Activated naive CD4-positive, alpha-beta T cell treated with anti-CD3 and anti-CD28 coated beads for 36 hours (primary cell): ENCODE measurements at regions of chr11 and their contacts with region 1.

Region 1: DNA sequence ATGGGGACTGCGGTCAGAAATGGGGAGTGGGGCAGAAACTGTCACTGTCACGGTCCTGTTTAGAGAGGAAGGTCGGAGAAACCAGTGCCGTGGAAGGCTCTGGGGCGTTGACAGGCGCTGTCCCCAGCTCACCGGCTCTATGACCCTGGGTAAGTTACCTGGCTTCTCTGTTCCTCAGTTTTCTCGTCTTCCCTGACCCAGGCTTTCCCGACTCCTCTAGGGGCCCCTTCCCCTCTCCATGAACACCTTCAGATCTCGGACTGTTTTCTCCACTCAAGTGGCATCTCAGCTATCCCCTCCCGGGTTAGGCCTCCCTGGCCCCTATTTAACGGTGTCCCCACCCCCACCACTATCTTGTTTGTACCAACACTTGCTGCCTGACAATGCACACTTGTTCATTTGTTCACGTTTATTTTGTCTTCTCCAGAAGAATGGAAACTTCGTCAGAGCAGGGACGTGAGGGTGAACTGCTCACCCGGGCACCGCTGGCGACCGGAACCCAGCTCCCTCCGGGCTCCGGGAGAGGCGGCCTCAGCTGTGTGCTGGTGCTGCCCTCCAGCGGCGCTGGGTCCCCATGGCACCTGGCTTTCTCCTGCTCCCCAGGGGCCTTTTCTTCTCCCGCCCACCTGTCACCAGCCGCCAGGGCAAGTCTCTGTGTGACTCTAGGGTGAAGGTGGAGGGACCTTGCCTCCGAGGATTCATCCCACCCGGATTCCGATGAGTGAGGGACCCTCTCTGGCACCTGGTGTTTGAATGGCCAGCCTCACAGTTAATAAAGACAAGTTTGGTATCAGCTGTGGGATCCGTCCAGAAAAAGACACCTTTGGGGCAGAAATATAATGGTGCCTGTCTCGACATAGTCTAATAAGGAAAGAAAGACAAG is 33.1 kb upstream of the SLC35C1 start:
- DNase-seq: peak; percentile 86
- H3K4me3 Mint-ChIP-seq: peak overlapping the region; percentile 86
- H3K27ac Mint-ChIP-seq: peak overlapping the region; percentile 50
- H3K4me1 Mint-ChIP-seq: peaks cover 7% of the 10 kb centered on the region
- H3K27me3 Mint-ChIP-seq: no peaks in the 10 kb centered on the region

Region 2: DNA sequence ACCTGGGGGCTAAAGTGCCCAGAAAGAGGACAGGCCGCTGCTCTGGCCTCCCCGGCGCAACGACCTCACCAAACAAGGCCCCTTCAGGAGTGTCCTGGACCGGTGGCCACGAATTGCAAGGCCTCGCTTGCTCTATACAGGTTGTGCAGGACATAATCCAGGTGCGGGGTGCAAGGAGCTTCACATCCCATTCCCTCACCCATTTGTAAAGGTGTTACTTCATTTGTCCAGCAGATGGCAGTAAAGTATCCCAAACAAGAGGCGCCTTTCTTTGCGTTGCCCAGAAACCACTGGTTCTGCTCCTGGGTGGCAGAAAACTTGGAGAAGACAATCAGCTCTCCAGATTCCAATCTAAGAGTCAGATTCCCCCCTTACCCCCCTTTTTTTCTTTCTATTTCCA is 661.2 kb before region 1 on chr11:
- CTCF ChIA-PET with region 1: no interaction called
- intact Hi-C with region 1: loop called (anchors 10 kb)
- DNase-seq: peak; percentile 40
- H3K4me3 Mint-ChIP-seq: no peak overlapping the region
- H3K27ac Mint-ChIP-seq: no peak overlapping the region
- H3K4me1 Mint-ChIP-seq: no peaks in the 10 kb centered on the region
- H3K27me3 Mint-ChIP-seq: peaks cover 24% of the 10 kb centered on the region

Region 3: DNA sequence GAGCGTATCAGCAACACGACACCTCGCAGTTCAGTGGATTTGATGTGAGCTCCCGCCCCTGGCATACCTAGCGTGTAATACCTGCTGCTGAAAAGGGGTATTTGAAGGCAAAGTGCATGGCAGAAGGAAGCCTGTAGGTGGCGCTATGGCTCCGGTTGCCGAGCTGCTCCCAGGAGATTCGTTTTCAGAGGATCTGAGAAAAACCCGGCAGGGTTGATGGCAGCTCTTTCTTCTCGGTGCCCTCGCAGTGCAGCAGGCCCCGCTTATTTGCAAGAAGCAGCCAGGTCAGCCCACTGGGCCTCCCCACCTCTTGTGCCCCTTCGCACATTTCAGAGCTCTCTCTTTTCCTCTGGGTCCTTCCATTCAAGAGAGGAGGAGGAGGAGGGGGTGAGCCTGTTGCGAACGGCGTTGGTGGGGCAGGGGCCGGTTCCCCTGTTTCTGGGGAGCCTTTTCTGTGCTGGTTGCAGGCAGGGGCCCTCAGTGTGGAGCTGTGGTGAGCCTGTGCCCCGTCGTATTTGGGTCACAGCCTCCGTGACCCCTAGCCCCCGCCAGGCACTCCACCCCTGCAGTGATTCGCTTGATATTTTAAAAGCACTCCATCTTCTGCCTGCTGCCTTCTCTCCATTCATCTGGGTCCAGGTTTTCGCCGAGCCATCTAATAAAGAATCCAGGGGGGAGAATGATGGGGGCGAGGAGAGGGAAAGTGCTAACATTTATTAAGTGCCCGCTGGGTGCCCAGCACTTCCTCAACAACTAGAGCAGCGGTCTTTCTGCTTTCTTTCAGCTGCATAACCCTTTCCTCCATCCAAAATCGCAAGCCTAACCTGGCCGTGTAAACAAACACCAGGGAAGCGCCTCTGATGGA is 400.3 kb before region 1 on chr11:
- CTCF ChIA-PET with region 1: interaction called, 26 read pairs
- intact Hi-C with region 1: loop called (anchors 1 kb)
- DNase-seq: peak; percentile 84
- H3K4me3 Mint-ChIP-seq: no peak overlapping the region
- H3K27ac Mint-ChIP-seq: no peak overlapping the region
- H3K4me1 Mint-ChIP-seq: peaks cover 13% of the 10 kb centered on the region
- H3K27me3 Mint-ChIP-seq: peaks cover 12% of the 10 kb centered on the region

Region 4: DNA sequence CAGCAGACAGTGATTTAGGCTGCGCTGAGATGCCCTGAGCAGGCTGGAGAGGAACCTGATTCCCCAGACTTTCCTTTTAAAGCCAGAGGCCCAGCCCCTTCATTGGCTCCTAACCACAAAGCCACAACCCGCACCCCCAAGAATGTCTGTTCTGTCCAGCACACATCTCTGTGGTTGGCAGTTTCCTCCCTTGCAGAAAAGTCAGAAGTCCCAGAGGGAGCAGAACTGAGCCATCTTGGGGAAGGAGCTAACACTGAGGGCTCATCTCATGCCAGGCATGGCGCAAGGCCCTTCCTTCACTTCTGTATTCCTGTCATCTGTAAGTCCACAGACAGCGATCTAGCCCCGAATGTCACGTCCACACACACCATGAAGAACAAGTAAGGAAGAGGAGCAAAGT is 388.6 kb before region 1 on chr11:
- CTCF ChIA-PET with region 1: no interaction called
- intact Hi-C with region 1: no loop called
- DNase-seq: no peak
- H3K4me3 Mint-ChIP-seq: no peak overlapping the region
- H3K27ac Mint-ChIP-seq: no peak overlapping the region
- H3K4me1 Mint-ChIP-seq: no peaks in the 10 kb centered on the region
- H3K27me3 Mint-ChIP-seq: peaks cover 13% of the 10 kb centered on the region

Region 5: GRCh38 chr11:45655347-45655756 is 116.5 kb before region 1 on chr11:
- CTCF ChIA-PET with region 1: interaction called, 42 read pairs
- intact Hi-C with region 1: loop called (anchors 2 kb)
- DNase-seq: peak; percentile 75
- H3K4me3 Mint-ChIP-seq: no peak overlapping the region
- H3K27ac Mint-ChIP-seq: no peak overlapping the region
- H3K4me1 Mint-ChIP-seq: peaks cover 3% of the 10 kb centered on the region
- H3K27me3 Mint-ChIP-seq: peaks cover 15% of the 10 kb centered on the region

Region 6: DNA sequence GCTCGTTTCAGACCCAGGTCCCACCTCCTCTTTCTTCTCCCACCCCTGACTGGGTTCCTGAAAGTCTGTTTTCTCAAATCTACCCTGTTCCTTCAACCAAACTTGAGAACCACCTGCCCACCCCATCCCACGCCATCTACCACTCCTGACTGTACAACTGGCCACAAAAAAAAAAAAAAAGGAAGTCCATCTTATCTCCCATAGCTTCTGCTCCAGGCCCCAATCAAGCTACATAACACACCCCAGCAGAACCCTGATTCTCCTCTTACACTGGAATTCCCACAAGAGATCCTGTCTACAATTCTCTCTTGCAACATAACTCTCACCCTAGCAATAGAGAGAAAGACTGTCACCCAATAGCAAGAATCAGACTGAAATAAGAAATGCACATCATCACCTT is 67.2 kb before region 1 on chr11:
- CTCF ChIA-PET with region 1: interaction called, 10 read pairs
- intact Hi-C with region 1: no loop called
- DNase-seq: no peak
- H3K4me3 Mint-ChIP-seq: no peak overlapping the region
- H3K27ac Mint-ChIP-seq: no peak overlapping the region
- H3K4me1 Mint-ChIP-seq: no peaks in the 10 kb centered on the region
- H3K27me3 Mint-ChIP-seq: peaks cover 35% of the 10 kb centered on the region

Region 7: DNA sequence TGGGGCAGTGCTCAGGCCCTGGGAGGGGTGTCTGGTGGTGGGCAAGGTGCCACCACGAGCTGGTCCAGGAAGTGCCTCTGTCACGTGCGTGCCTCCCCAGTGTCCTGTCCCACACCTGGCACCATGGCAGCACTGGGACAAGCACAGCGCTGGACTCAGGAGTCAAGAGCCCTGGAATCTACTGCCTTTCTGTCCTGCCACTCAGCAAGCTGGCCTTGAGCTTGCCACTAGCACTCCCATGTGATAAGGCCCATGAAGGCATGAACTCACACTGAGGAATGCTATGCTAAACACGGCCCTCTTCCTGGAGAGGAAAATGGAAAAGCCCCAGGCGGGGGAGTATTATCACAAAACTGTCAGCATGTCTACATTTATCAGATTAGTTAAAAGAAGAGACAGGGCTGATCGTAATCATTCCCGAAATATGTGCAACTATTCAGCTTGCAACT is 17.5 kb before region 1 on chr11:
- CTCF ChIA-PET with region 1: interaction called, 18 read pairs
- intact Hi-C with region 1: no loop called
- DNase-seq: no peak
- H3K4me3 Mint-ChIP-seq: no peak overlapping the region
- H3K27ac Mint-ChIP-seq: no peak overlapping the region
- H3K4me1 Mint-ChIP-seq: no peaks in the 10 kb centered on the region
- H3K27me3 Mint-ChIP-seq: peaks cover 16% of the 10 kb centered on the region

Region 8: DNA sequence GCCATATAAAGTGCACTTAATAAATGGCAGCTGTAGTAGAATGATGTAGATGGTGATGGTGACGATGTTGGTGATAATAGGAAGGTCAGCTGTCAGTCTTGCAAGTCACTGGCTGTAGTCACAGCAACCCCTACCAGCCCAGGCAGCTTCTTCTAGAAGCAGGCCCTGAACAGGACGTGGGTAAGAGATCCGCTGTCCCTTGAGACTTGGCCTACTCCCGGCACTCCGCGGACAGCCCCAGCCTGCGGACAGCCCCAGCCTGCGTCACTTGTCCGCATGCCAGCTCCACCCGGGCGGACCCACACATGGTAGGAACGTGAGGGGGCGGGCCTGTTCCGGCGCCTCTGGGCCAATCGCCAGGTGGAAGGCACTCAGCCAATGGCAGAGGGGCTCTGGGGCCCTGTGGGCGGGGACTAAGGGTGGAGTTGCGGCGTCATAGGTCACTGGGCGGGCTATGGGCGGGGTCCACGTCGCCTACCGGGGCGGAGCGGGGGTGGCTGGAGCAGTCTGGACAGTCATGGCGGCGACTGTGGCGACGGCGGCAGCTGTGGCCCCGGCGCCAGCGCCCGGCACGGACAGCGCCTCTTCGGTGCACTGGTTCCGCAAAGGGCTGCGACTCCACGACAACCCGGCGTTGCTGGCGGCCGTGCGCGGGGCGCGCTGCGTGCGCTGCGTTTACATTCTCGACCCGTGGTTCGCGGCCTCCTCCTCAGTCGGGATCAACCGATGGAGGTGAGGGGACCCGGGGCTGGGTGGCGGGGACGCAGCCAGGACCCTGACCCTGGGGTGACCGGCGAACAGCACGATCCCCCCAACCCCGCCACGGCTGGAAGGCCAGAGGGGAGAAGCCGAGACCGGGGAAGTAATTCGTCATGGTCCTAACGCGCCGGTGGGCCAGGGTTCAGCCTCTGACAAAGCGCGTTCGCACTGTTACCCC is 75.4 kb after region 1 on chr11 and contains the start of gene CRY2:
- CTCF ChIA-PET with region 1: interaction called, 14 read pairs
- intact Hi-C with region 1: loop called (anchors 2 kb)
- DNase-seq: peak; percentile 99
- H3K4me3 Mint-ChIP-seq: peak within 1 kb of the TSS; percentile 78
- H3K27ac Mint-ChIP-seq: peak within 1 kb of the TSS; percentile 63
- H3K4me1 Mint-ChIP-seq: peaks cover 45% of the 10 kb centered on the region
- H3K27me3 Mint-ChIP-seq: no peaks in the 10 kb centered on the region
- total RNA-seq, gene CRY2: 13.9 to 16.2 TPM